AG04450 (cell line): ENCODE measurements at regions of chr14 and their contacts with region 1.

Region 1: GRCh38 chr14:76168531-76168930 is 16.8 kb downstream of the GPATCH2L start:
- DNase-seq: no peak
- H3K4me3 ChIP-seq: no peak overlapping the region
- H3K27ac ChIP-seq: no peak overlapping the region
- H3K27me3 ChIP-seq: no peaks in the 10 kb centered on the region
- CTCF ChIP-seq: no peak

Region 2: GRCh38 chr14:76151398-76152339 is 16.9 kb before region 1 on chr14 and contains the start of gene GPATCH2L:
- CTCF ChIA-PET with region 1: no interaction called
- POLR2A ChIA-PET with region 1: no interaction called
- DNase-seq: peak; percentile 61
- H3K4me3 ChIP-seq: peak within 1 kb of the TSS; percentile 96
- H3K27ac ChIP-seq: peak within 1 kb of the TSS; percentile 94
- H3K27me3 ChIP-seq: peaks cover 7% of the 10 kb centered on the region
- CTCF ChIP-seq: no peak
- polyA plus RNA-seq, gene GPATCH2L: 29.5 and 32.2 TPM in 2 replicates

Region 3: GRCh38 chr14:76181546-76181945 is 13.0 kb after region 1 on chr14:
- CTCF ChIA-PET with region 1: interaction called, 11 read pairs
- POLR2A ChIA-PET with region 1: no interaction called
- DNase-seq: no peak
- H3K4me3 ChIP-seq: no peak overlapping the region
- H3K27ac ChIP-seq: no peak overlapping the region
- H3K27me3 ChIP-seq: no peaks in the 10 kb centered on the region
- CTCF ChIP-seq: peak; percentile 22

Region 4: GRCh38 chr14:76203086-76204001 is 34.8 kb after region 1 on chr14:
- CTCF ChIA-PET with region 1: no interaction called
- POLR2A ChIA-PET with region 1: no interaction called
- DNase-seq: peak; percentile 96
- H3K4me3 ChIP-seq: no peak overlapping the region
- H3K27ac ChIP-seq: peak overlapping the region; percentile 88
- H3K27me3 ChIP-seq: no peaks in the 10 kb centered on the region
- CTCF ChIP-seq: no peak